PC-3 (cell line): ENCODE measurements at regions of chr6 and their contacts with region 1.

Region 1: GRCh38 chr6:153023977-153024708 is 21.6 kb upstream of the MTRF1L start:
- DNase-seq: peak; percentile 82
- ATAC-seq: peak; percentile 96
- H3K4me3 ChIP-seq: no peak overlapping the region
- H3K27ac ChIP-seq: no peak overlapping the region
- H3K4me1 ChIP-seq: 0 out of 2 replicates have a peak, but pooled peaks cover 2% of the 10 kb centered on the region
- H3K27me3 ChIP-seq: no peaks in the 10 kb centered on the region
- CTCF ChIP-seq: peak; percentile 74

Region 2: DNA sequence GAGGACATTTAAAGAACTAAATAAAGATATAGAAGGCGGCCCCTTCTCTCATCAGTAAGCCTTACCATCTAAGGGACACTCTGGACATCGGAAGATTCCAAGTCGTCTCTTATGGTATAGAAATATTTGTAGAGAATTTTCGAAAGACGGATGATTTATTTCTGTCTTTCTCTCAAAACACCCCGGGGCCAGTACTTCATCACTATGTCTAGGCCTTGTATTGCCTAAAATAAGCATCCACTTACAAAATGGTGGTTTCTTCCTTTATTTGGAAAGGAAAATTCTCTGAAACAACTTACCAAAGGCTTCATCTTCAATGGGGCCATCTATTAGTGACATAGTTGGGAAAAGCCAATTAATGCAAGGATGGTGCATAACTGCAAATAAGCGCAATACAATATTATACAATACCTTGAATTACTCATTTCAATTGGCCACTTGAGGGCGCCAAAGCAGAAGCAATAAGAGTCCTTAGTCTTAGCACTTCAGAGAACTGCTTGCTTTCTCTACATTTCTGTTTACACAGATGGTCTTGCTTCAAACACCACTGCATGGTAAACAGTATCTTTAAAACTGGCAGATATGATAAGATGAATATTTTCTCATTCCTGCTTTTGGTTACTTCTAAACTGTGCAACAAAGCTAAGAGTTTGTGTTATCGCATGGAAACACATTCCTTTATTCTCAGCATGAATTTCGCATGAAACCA is 160.4 kb before region 1 on chr6:
- CTCF ChIA-PET with region 1: no interaction called
- POLR2A ChIA-PET with region 1: no interaction called
- intact Hi-C with region 1: loop called (anchors 2 kb)
- DNase-seq: peak; percentile 74
- ATAC-seq: peak; percentile 90
- H3K4me3 ChIP-seq: no peak overlapping the region
- H3K27ac ChIP-seq: no peak overlapping the region
- H3K4me1 ChIP-seq: no peaks in the 10 kb centered on the region
- H3K27me3 ChIP-seq: peaks cover 58% of the 10 kb centered on the region
- CTCF ChIP-seq: peak; percentile 75

Region 3: GRCh38 chr6:152954443-152954842 is 69.7 kb before region 1 on chr6:
- CTCF ChIA-PET with region 1: no interaction called
- POLR2A ChIA-PET with region 1: no interaction called
- intact Hi-C with region 1: loop called (anchors 1 kb)
- DNase-seq: peak; percentile 24
- ATAC-seq: peak; percentile 60
- H3K4me3 ChIP-seq: no peak overlapping the region
- H3K27ac ChIP-seq: no peak overlapping the region
- H3K4me1 ChIP-seq: peaks cover 15% of the 10 kb centered on the region; the same call in 1 of the 2 replicates
- H3K27me3 ChIP-seq: no peaks in the 10 kb centered on the region; the same call in 1 of the 2 replicates
- CTCF ChIP-seq: peak; percentile 41; the same call in 1 of the 2 replicates

Region 4: GRCh38 chr6:153002607-153003365 is 21.4 kb before region 1 on chr6 and contains the start of gene MTRF1L:
- CTCF ChIA-PET with region 1: no interaction called
- POLR2A ChIA-PET with region 1: no interaction called
- intact Hi-C with region 1: loop called (anchors 1 kb)
- DNase-seq: peak; percentile 95
- ATAC-seq: peak; percentile 90
- H3K4me3 ChIP-seq: peak within 1 kb of the TSS; percentile 100
- H3K27ac ChIP-seq: peak within 1 kb of the TSS; percentile 81
- H3K4me1 ChIP-seq: peaks cover 17% of the 10 kb centered on the region
- H3K27me3 ChIP-seq: no peaks in the 10 kb centered on the region
- CTCF ChIP-seq: no peak
- total RNA-seq, gene MTRF1L: 12.7 and 19.1 TPM in 2 replicates